ENCODE measurements at regions of chr13 and their contacts with region 1.

Region 1: DNA sequence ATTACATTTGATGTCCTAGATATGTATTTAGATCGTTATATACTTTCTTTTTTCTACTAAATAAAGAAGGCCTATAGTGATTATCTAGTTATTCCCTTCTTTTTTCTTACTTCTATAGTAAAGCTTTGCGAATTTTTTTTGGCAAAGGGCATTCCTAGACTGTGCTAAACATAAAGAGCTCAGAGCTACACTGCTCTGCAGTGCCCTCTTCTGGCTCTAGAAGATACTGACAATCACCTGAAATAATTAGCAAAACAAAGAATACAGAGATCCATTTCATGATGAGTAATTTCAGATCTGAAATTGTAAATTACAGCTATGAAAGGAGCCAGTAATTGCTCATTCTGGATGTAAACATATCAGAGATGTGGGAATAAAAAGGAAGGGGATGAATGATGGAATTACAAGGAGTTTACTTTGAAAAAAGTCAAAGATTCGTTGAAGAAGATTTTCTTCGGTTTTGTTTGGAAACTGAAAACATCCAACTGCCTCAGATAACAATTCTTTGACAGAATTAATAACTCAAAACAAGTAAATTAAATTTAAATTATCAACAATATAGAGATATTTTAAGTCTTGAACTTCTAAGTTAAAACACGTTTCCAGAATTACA is 288.5 kb downstream of the NALCN start:
- DNase-seq: peak; percentile 72
- ATAC-seq: peak; percentile 74
- H3K4me3 ChIP-seq: no peak overlapping the region
- H3K27ac ChIP-seq: no peak overlapping the region
- H3K4me1 ChIP-seq: no peaks in the 10 kb centered on the region
- H3K27me3 ChIP-seq: no peaks in the 10 kb centered on the region
- CTCF ChIP-seq: peak; percentile 80

Region 2: GRCh38 chr13:100573121-100573520 is 554.7 kb before region 1 on chr13:
- CTCF ChIA-PET with region 1: interaction called, 3 read pairs
- POLR2A ChIA-PET with region 1: no interaction called
- intact Hi-C with region 1: loop called (anchors 5 kb)
- DNase-seq: peak; percentile 76
- ATAC-seq: peak; percentile 92
- H3K4me3 ChIP-seq: no peak overlapping the region
- H3K27ac ChIP-seq: no peak overlapping the region
- H3K4me1 ChIP-seq: no peaks in the 10 kb centered on the region
- H3K27me3 ChIP-seq: no peaks in the 10 kb centered on the region
- CTCF ChIP-seq: peak; percentile 80

Region 3: GRCh38 chr13:100721885-100722512 is 405.8 kb before region 1 on chr13:
- CTCF ChIA-PET with region 1: no interaction called
- POLR2A ChIA-PET with region 1: no interaction called
- intact Hi-C with region 1: loop called (anchors 1 kb)
- DNase-seq: peak; percentile 63
- ATAC-seq: peak; percentile 74
- H3K4me3 ChIP-seq: no peak overlapping the region
- H3K27ac ChIP-seq: no peak overlapping the region
- H3K4me1 ChIP-seq: no peaks in the 10 kb centered on the region; the same call in 1 of the 2 replicates
- H3K27me3 ChIP-seq: no peaks in the 10 kb centered on the region
- CTCF ChIP-seq: peak; percentile 69

Region 4: GRCh38 chr13:100767192-100767591 is 360.7 kb before region 1 on chr13:
- CTCF ChIA-PET with region 1: interaction called, 10 read pairs
- POLR2A ChIA-PET with region 1: no interaction called
- intact Hi-C with region 1: no loop called
- DNase-seq: no peak
- ATAC-seq: no peak
- H3K4me3 ChIP-seq: no peak overlapping the region
- H3K27ac ChIP-seq: no peak overlapping the region
- H3K4me1 ChIP-seq: no peaks in the 10 kb centered on the region
- H3K27me3 ChIP-seq: no peaks in the 10 kb centered on the region
- CTCF ChIP-seq: no peak

Region 5: GRCh38 chr13:101535192-101535746 is 407.4 kb after region 1 on chr13:
- CTCF ChIA-PET with region 1: no interaction called
- POLR2A ChIA-PET with region 1: no interaction called
- intact Hi-C with region 1: no loop called
- DNase-seq: peak; percentile 35
- ATAC-seq: peak; percentile 62
- H3K4me3 ChIP-seq: no peak overlapping the region
- H3K27ac ChIP-seq: peak overlapping the region; percentile 38
- H3K4me1 ChIP-seq: peaks cover 21% of the 10 kb centered on the region
- H3K27me3 ChIP-seq: no peaks in the 10 kb centered on the region
- CTCF ChIP-seq: no peak

Measured in PC-3 (cell line).